ENCODE measurements at regions of chr1 and their contacts with region 1.

Region 1: DNA sequence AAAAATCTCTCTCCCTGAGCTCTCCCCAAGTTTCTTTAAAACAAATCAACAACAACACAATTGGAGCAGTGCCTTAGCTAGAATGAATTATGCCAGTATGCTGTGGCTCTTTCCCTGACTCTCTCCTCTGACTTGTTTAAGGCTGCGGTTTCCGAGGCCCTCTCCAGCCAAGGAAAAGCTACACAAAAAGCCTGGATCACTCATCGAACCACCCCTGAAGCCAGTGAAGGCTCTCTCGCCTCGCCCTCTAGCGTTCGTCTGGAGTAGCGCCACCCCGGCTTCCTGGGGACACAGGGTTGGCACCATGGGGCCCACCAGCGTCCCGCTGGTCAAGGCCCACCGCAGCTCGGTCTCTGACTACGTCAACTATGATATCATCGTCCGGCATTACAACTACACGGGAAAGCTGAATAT is 1.9 kb downstream of the S1PR1 start:
- DNase-seq: peak; percentile 97
- H3K4me3 Mint-ChIP-seq: peak overlapping the region; percentile 99
- H3K27ac Mint-ChIP-seq: peak overlapping the region; percentile 99
- H3K4me1 Mint-ChIP-seq: peaks cover 44% of the 10 kb centered on the region
- H3K27me3 Mint-ChIP-seq: no peaks in the 10 kb centered on the region

Region 2: GRCh38 chr1:100443811-100444571 is 794.7 kb before region 1 on chr1:
- CTCF ChIA-PET with region 1: no interaction called
- intact Hi-C with region 1: loop called (anchors 5 kb)
- DNase-seq: peak; percentile 53
- H3K4me3 Mint-ChIP-seq: peak overlapping the region; percentile 72
- H3K27ac Mint-ChIP-seq: peak overlapping the region; percentile 96
- H3K4me1 Mint-ChIP-seq: peaks cover 85% of the 10 kb centered on the region
- H3K27me3 Mint-ChIP-seq: no peaks in the 10 kb centered on the region

Region 3: GRCh38 chr1:100928128-100928527 is 310.6 kb before region 1 on chr1:
- CTCF ChIA-PET with region 1: interaction called, 5 read pairs
- intact Hi-C with region 1: loop called (anchors 1 kb)
- DNase-seq: peak; percentile 49
- H3K4me3 Mint-ChIP-seq: no peak overlapping the region
- H3K27ac Mint-ChIP-seq: no peak overlapping the region
- H3K4me1 Mint-ChIP-seq: peaks cover 30% of the 10 kb centered on the region
- H3K27me3 Mint-ChIP-seq: no peaks in the 10 kb centered on the region

Region 4: GRCh38 chr1:101002551-101002950 is 236.1 kb before region 1 on chr1:
- CTCF ChIA-PET with region 1: no interaction called
- intact Hi-C with region 1: loop called (anchors 5 kb)
- DNase-seq: no peak
- H3K4me3 Mint-ChIP-seq: no peak overlapping the region
- H3K27ac Mint-ChIP-seq: peak overlapping the region; percentile 59
- H3K4me1 Mint-ChIP-seq: peaks cover 52% of the 10 kb centered on the region
- H3K27me3 Mint-ChIP-seq: no peaks in the 10 kb centered on the region

Region 5: GRCh38 chr1:101060992-101061391 is 177.7 kb before region 1 on chr1:
- CTCF ChIA-PET with region 1: no interaction called
- intact Hi-C with region 1: loop called (anchors 5 kb)
- DNase-seq: no peak
- H3K4me3 Mint-ChIP-seq: no peak overlapping the region
- H3K27ac Mint-ChIP-seq: no peak overlapping the region
- H3K4me1 Mint-ChIP-seq: peaks cover 24% of the 10 kb centered on the region
- H3K27me3 Mint-ChIP-seq: no peaks in the 10 kb centered on the region

Region 6: DNA sequence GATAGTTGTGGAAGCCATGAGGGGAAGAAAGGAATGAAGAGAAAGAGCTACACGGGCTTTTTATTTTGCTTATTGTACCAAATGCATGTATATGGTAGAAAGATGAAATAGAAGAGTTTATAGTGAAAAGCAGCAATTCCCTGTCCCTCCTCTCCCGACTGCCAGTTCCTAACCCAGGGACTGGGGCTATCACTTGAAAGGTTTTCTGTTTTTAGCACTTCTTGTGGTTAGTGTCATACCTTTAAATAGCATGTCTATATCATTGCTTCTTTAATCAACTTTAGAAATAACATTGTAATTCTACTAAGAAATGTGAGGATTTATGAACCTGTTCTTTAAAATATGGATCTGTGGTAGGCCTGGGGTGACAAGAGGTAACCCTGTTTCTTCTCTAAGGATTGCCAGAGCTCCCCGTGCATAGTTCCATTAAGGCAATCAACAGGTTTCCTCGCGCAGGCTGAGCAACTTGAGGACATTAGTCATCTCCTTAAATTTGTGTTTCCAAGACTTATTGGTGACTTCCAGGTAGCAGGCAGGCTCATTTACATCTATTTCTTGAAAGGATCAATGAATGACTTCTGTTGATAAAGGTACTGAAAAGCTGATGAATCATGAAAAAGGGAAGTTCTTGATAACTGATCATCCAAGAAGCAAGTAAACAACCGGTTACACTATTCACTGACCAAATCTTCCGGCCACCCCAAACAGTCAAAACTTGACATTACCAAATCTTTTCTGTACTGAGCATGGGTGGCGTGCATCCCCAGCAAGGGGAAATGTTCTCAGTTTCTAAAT is 39.6 kb before region 1 on chr1:
- CTCF ChIA-PET with region 1: interaction called, 6 read pairs
- intact Hi-C with region 1: loop called (anchors 1 kb)
- DNase-seq: peak; percentile 82
- H3K4me3 Mint-ChIP-seq: no peak overlapping the region
- H3K27ac Mint-ChIP-seq: peak overlapping the region; percentile 79
- H3K4me1 Mint-ChIP-seq: peaks cover 28% of the 10 kb centered on the region
- H3K27me3 Mint-ChIP-seq: no peaks in the 10 kb centered on the region

Region 7: DNA sequence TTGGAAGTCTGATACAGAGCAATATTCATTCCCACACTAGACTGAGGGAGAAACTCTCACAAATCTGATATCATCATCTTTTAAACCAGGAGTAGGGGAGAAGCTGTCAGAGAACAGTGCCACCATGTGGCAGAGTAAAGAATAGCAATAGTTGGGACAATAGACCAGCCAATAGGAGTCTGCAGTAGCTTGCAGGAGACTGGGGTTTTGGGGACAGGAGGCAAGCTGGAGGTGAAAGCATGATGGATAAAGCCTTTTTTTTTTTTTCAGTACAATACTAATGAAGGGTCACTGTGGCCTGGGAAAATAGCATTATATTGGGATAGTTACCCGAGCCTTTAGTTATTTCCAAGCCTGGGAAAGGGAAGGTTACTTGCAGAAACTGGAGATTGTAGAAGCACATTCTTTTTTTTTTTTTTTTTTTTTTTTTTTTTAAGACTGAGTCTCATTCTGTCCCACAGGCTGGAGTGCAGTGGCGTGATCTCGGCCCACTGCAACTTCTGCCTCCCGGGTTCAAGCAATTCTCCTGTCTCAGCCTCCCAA is 118.8 kb after region 1 on chr1:
- CTCF ChIA-PET with region 1: interaction called, 6 read pairs
- intact Hi-C with region 1: loop called (anchors 1 kb)
- DNase-seq: peak; percentile 85
- H3K4me3 Mint-ChIP-seq: no peak overlapping the region
- H3K27ac Mint-ChIP-seq: no peak overlapping the region
- H3K4me1 Mint-ChIP-seq: peaks cover 7% of the 10 kb centered on the region
- H3K27me3 Mint-ChIP-seq: no peaks in the 10 kb centered on the region